OCI-LY7 (cell line): ENCODE measurements at regions of chr7 and their contacts with region 1.

Region 1: DNA sequence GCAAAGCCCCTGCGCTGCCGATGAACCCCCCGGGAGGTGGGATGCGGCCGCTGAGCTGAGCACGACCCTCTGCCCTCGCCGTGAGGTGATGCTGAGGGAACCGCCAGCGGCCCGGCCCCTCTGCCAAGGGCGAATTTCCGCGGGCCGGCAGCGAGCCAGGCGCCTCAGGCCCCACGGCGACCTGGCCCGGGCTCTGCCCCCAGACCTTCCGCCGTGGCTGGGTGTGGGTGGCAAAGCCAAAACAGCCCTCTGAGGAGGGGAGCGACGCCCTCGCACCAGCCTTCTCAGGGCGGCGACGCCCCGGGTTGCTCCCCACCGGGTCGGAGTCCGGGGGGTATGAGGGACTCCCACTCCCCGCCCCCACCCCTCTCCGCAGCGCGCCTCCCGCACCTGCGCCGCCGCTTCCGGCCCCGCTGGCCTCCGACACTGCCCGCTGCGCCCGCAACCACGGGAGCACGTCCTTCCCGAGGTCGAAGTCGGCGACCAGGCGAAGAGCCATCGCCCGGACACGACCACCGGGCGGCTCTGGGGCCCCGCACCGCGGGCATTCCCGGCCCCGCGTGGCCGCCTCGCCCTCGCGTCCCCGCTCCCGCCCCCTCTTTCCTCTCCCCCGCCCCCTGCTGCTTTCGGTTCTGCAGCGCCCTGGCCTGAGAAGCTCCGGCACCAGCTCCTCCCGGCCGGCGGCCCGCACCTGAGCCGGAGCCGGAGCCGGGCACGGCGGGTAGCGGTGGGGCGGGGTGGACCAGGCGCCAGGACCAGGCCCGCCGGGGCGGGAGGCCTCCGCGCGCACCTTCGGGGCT is at the start of gene GSAP:
- DNase-seq: no peak
- H3K4me3 ChIP-seq: peak within 1 kb of the TSS; percentile 25
- H3K27ac ChIP-seq: no peak within 1 kb of the TSS
- H3K4me1 ChIP-seq: no peaks in the 10 kb centered on the region
- CTCF ChIP-seq: no peak
- total RNA-seq, gene GSAP: not detected in 2 replicates

Region 2: DNA sequence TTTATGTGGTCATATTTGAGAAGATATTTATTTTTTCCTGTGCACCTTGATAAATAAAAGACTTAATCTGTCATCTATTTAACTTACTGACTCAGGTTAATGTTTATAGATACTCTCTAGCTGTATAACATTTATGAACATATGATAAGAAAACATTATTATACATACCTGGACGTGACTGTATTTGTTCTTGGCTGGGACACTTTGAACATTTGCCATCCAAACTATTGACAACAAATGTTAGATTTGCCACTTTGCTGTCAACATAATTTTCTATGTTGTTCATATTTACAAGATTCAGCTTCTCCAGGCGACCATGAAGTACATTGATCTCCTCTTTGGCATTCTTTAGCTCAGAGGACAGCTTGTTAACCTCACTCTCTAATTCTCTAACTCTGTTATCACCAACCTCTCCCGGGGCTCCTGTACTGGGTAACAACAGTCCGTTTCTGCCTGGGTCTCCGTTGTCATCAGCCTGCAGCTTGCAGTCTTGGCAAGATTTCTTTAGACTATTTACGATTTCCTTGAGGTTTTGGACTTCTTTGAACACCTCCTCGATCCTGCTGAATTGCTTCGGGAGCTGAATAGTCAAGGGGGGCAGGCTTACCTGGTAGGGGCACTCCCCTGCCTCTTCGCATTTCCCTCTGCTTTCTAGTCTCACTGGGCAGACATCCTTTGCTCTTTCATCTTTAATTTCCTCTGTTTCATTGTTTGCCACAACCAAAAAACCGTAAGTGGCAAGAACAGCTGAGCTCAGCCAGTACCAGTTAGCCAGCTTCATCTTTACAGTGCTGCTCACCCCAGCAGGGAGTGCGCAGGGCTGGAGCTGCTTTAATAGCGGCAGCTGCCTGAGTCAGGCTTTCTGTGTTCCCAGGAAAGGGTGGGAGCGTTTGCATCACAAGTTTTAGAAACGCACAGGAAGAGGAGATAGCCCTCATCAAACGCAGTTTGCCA is 216.7 kb before region 1 on chr7 and contains the start of gene FGL2:
- CTCF ChIA-PET with region 1: no interaction called
- POLR2A ChIA-PET with region 1: no interaction called
- intact Hi-C with region 1: no loop called
- DNase-seq: peak; percentile 32
- H3K4me3 ChIP-seq: peak within 1 kb of the TSS; percentile 59
- H3K27ac ChIP-seq: peak within 1 kb of the TSS; percentile 34
- H3K4me1 ChIP-seq: peaks cover 33% of the 10 kb centered on the region
- CTCF ChIP-seq: no peak
- total RNA-seq, gene FGL2: 0.06 and 0.13 TPM in 2 replicates

Region 3: DNA sequence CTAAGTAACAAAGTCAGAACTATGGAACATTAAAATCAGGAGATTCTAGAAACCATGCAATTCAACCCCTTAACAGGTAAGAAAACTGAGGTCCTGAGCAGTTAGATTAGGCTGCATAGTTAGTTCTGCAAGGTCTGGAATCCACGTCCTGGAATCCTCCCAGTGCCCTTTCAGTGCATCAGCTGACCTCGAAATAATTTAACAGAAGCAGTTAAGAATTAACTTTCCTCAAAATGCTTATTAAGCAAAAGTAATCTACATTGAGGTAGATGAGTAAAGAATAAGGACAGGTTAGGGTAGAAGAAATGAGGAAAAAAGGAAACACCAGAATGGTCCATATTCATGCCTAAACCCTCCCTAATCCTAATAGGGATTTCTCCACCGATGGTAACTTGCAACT is 37.4 kb before region 1 on chr7:
- CTCF ChIA-PET with region 1: no interaction called
- POLR2A ChIA-PET with region 1: interaction called, 4 read pairs
- intact Hi-C with region 1: loop called (anchors 5 kb)
- DNase-seq: no peak
- H3K4me3 ChIP-seq: no peak overlapping the region
- H3K27ac ChIP-seq: no peak overlapping the region
- H3K4me1 ChIP-seq: no peaks in the 10 kb centered on the region
- CTCF ChIP-seq: no peak

Region 4: GRCh38 chr7:77403957-77404356 is 12.1 kb before region 1 on chr7:
- CTCF ChIA-PET with region 1: no interaction called
- POLR2A ChIA-PET with region 1: interaction called, 3 read pairs
- intact Hi-C with region 1: loop called (anchors 1 kb)
- DNase-seq: no peak
- H3K4me3 ChIP-seq: no peak overlapping the region
- H3K27ac ChIP-seq: no peak overlapping the region
- H3K4me1 ChIP-seq: no peaks in the 10 kb centered on the region
- CTCF ChIP-seq: no peak